ENCODE measurements at regions of chr7 and their contacts with region 1.

Region 1: DNA sequence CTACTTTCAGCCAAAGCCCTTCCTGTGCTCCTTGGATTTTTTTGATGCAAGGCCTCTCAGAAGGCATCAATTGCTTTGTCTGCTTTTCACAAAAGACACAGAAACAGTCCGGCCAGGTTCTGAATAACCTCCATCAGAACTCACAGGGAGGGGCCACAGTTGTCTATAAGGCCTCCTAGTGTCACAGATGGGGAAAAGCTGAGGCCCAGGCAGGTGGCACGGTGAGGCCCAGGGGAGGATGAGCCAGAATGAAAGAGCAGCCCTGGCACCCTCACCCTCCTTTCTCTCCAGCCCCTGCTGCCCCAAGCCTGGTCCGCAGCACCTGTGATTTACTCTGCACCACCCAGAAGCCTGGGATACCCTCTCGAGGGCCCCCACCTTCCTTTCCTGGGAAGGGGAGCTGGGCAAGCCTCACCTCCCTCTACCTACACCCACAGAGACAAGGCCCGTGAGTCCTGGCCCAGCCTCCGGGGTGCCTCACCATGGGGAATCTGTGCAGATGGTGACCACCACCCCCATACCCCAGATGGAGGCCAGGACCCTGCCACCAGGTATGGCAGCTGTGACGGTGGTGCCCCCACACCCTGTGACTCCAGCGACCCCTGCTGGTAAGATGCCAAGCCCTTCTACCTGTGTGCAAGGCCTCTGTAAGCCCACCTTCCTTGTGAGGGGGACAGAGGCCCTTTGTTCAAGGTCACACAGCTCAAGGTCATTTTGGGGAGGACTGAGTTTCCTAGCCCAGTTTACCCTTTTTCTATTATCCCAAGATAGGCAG is 26.2 kb upstream of the ZNF467 start:
- DNase-seq: no peak
- H3K4me3 ChIP-seq: no peak overlapping the region
- H3K27ac ChIP-seq: no peak overlapping the region
- H3K4me1 ChIP-seq: no peaks in the 10 kb centered on the region
- H3K27me3 ChIP-seq: peaks cover 51% of the 10 kb centered on the region
- CTCF ChIP-seq: peak; percentile 56

Region 2: DNA sequence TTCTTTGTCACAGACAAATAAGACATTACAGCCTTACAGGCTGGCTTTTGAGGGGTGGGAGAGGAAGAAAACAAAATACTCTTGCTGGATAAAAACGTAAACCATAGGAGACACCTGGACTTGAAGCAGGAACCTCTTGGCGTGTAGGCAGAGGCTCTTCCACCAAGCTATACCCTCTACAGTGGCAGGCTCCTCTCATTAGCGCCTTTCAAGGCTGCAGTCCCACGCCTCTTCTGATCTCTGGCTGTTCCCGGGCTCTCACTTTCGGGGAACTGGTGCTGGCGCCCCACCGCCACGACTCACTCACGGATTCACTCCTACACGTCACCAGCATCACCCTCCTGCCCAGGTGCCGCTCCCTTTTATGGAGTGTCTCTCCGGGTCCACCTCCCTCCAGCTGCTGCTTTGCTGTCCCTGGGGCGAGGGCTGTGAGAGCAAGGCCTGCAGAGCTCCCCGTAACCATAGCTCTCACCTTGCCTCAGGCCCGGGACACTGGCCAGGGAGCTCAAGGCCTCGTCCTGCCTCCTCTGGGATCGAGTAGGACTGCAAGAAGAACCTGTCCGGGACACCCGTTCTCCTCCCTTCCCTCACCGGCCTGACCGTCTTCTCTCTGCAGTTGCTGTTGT is 401.3 kb before region 1 on chr7:
- CTCF ChIA-PET with region 1: no interaction called
- POLR2A ChIA-PET with region 1: no interaction called
- intact Hi-C with region 1: no loop called
- DNase-seq: no peak
- H3K4me3 ChIP-seq: no peak overlapping the region
- H3K27ac ChIP-seq: no peak overlapping the region
- H3K4me1 ChIP-seq: no peaks in the 10 kb centered on the region
- H3K27me3 ChIP-seq: no peaks in the 10 kb centered on the region
- CTCF ChIP-seq: no peak

Region 3: GRCh38 chr7:149748076-149748874 is 51.3 kb before region 1 on chr7:
- CTCF ChIA-PET with region 1: interaction called, 14 read pairs
- POLR2A ChIA-PET with region 1: no interaction called
- intact Hi-C with region 1: no loop called
- DNase-seq: no peak
- H3K4me3 ChIP-seq: no peak overlapping the region
- H3K27ac ChIP-seq: no peak overlapping the region
- H3K4me1 ChIP-seq: no peaks in the 10 kb centered on the region
- H3K27me3 ChIP-seq: 0 out of 2 replicates have a peak, but pooled peaks cover 15% of the 10 kb centered on the region
- CTCF ChIP-seq: no peak

Measured in PC-9 (cell line).